ENCODE measurements at regions of chr5 and their contacts with region 1.

Region 1: DNA sequence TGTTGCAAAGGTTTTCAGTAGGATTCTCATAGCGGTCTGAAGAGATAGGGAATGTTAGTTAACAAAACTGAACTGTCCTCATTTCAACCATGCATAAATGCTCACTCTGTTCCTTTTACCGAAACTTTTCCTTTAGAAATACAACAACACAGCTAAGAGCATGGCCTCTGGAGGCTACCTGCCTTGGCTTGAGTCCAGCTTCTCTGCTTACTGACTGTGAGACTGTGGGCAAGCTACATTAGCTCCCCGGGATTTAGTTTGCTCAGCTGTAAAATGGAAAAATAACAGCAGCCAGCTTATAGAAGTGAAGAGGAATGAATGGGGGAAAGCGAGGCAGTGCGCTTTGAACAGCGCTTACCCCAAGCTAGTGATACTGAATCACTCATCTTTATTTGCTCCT is 507.9 kb upstream of the DAP start:
- DNase-seq: no peak
- H3K4me3 ChIP-seq: no peak overlapping the region
- H3K27ac ChIP-seq: no peak overlapping the region
- H3K4me1 ChIP-seq: no peaks in the 10 kb centered on the region
- H3K27me3 ChIP-seq: peaks cover 0 to 11% (median 0%) of the 10 kb centered on the region in 4 donors
- CTCF ChIP-seq: no peak
- EP300 ChIP-seq: no peak
- POLR2A ChIP-seq: no peak

Region 2: GRCh38 chr5:11494340-11494739 is 225.4 kb after region 1 on chr5:
- intact Hi-C with region 1: loop called (anchors 10 kb)
- DNase-seq: no peak
- H3K4me3 ChIP-seq: no peak overlapping the region
- H3K27ac ChIP-seq: no peak overlapping the region
- H3K4me1 ChIP-seq: no peaks in the 10 kb centered on the region
- H3K27me3 ChIP-seq: no peaks in the 10 kb centered on the region
- CTCF ChIP-seq: peak; percentile 6 to 30 (median 20)
- EP300 ChIP-seq: no peak
- POLR2A ChIP-seq: no peak